ENCODE measurements at regions of chr1 and their contacts with region 1.

Region 1: DNA sequence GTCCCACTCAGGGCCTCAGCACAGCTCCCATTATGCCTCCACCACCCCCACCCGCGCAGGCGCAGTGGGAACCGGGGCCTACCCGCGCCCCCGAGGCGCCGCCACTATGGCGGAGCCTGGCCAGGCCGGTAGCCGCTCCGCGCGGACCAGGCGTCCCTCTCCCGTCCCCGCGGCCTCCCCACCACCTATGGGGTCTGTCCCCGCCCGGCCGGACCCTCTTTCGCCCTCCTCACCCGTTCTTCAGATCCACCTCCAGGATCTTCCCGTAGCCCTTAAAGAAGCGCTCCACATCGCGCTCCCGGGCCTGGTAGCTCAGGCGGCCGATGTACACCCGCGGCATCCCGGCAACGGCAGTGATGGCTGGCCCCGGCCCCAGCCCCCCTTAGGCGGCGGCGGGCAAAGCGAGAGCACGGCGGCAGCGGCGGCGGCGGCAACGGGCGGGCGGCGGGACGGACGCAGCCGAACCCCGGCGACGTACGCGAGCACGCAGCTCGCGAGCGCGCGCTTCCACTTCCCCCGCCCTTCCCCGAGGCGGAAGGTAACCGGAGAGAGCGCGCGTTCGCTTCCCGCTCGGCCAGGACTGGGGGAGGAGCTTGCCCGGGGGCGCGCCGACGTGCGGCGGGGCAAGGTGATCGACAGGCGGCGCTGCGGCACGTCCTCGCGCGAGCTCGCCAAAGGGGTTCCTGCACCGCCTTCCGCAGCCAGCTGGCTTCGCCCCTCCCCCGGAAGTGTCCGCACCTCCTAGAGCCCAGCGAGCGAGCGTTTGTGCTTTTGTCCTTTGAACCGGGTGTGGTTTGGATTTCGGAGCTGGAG is at the start of gene SRSF4:
- DNase-seq: peak; percentile 100
- H3K4me3 Mint-ChIP-seq: peak within 1 kb of the TSS; percentile 96
- H3K27ac Mint-ChIP-seq: peak within 1 kb of the TSS; percentile 97
- H3K4me1 Mint-ChIP-seq: peaks cover 44% of the 10 kb centered on the region
- H3K27me3 Mint-ChIP-seq: no peaks in the 10 kb centered on the region
- total RNA-seq, gene SRSF4: 138 and 141 TPM in 2 replicates

Region 2: GRCh38 chr1:28642847-28643635 is 538.6 kb before region 1 on chr1 and contains the start of gene TAF12:
- intact Hi-C with region 1: loop called (anchors 5 kb)
- DNase-seq: peak; percentile 96
- H3K4me3 Mint-ChIP-seq: peak within 1 kb of the TSS; percentile 98
- H3K27ac Mint-ChIP-seq: peak within 1 kb of the TSS; percentile 99
- H3K4me1 Mint-ChIP-seq: peaks cover 39% of the 10 kb centered on the region
- H3K27me3 Mint-ChIP-seq: no peaks in the 10 kb centered on the region
- total RNA-seq, gene TAF12: 31.7 and 33.8 TPM in 2 replicates

Region 3: DNA sequence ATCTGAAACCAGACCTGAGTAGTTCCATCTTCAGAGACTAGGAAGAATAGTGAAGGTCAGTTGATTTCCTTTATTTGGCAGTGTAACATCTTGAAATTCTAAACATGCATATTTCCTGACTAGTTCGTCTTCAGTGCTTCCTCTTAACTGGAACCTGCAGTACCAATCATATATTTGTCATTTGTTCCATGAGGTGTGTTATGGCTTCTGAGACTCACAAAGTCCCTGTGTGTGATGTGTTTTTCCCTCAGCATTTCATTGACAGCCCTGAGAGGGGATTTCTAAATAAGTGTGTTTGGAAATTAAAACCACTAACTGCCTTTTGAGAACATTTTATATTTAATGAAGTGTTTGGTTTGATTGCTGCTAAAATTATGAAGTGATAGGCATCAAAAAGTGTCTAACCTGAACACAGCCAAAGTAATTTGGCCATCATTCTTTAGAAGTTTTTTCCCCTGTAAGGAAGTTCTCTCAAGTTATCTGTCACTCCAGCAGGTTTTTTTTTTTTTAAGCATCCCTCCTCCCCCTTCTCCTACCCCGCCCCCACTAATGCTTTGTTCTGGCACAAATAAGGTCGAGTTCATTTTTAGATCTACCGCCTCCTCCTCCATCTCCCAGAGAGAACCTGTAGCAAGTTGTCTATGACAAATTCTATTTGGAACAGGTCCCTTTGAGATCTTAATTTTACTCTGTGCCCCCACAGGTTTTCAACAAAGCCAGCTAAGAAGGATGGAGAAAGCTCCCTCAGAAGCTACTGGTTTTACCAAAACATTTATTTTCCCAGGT is 119.3 kb before region 1 on chr1:
- intact Hi-C with region 1: loop called (anchors 5 kb)
- DNase-seq: no peak
- H3K4me3 Mint-ChIP-seq: peak overlapping the region; percentile 74
- H3K27ac Mint-ChIP-seq: peak overlapping the region; percentile 91
- H3K4me1 Mint-ChIP-seq: peaks cover 25% of the 10 kb centered on the region
- H3K27me3 Mint-ChIP-seq: no peaks in the 10 kb centered on the region

Region 4: DNA sequence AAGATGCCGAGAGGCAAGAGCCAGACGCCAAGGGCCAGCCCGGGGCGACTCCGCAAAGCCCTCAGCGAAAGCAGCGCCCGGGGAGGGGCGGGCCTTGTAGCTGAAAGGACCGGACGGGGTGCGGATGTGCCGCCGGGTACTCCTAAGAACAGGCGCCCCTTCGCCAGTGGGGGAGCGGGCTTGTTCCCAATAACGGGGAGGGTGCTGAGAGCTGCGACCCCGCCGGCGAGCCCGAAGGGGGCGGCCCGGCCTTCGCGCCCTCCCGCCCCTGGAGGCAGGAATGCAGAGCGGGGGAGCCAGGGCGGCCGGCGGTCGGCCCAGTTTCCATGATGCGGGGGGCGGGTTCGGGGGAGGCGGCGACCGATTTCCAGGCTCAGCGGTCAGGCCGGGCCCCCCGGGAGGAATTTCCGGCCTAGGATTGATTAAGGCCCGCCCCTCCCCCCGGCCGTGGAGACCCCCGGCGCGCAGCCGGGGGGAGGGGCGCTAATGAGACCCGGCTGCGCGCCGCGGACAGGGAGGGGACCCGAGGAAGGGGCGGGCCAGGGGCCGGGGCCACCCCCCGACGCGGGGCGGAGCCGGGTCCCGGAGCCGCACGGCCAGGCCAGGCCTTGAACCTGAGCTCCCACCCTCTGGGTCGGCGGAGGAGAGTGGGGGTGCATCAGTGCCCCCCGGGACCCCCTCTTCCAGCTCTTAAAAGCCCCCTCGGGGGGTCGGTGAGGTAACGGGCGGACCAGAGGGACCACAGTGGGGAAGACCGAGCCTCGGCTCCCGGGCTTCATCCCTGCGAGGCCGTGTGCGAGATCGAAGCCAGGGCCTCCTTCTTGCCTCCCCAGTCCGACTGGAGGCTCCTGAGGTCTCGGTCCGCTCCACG is 57.0 kb before region 1 on chr1:
- intact Hi-C with region 1: loop called (anchors 1 kb)
- DNase-seq: peak; percentile 88
- H3K4me3 Mint-ChIP-seq: peak overlapping the region; percentile 82
- H3K27ac Mint-ChIP-seq: peak overlapping the region; percentile 29
- H3K4me1 Mint-ChIP-seq: peaks cover 6% of the 10 kb centered on the region
- H3K27me3 Mint-ChIP-seq: peaks cover 17% of the 10 kb centered on the region

Region 5: DNA sequence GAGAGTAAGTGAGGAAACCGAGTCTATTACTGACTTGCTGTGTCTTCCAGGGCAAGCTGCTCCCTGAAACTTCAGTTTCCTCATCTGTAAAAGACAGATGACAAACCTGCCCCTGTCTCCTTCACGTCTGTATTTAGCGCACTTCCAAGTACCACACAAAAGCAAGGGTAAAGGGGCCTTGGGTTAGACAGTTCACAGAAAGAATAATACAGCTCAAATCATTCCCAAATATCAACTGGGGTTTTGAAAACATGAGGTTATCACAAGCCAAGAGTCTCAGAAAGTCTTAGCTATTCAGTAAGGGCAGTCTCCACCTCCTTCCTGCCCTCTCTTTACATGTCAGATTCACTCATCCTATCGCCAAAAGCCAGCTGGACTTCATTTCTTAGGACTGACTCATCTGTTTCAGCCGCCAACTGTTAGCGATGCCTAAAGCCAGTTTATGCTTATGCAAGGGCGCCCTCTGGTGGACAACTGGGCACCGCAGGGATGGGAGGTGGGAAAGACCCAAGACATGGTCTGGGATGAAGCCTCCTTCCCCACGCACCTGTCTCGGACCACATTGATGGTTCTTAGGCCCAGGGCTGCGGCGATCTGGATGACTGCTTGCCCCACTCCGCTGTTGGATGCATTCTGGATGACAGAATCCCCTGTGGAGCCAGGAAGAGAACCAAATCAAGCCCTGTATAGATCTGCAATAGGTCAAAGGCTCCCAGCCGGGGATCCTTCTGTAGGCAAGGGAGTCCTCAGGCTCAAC is 21.1 kb after region 1 on chr1:
- intact Hi-C with region 1: loop called (anchors 1 kb)
- DNase-seq: peak; percentile 97
- H3K4me3 Mint-ChIP-seq: no peak overlapping the region
- H3K27ac Mint-ChIP-seq: peak overlapping the region; percentile 34
- H3K4me1 Mint-ChIP-seq: peaks cover 15% of the 10 kb centered on the region
- H3K27me3 Mint-ChIP-seq: no peaks in the 10 kb centered on the region

Region 6: GRCh38 chr1:29230553-29231378 is 49.1 kb after region 1 on chr1 and contains the start of gene MECR:
- intact Hi-C with region 1: loop called (anchors 2 kb)
- DNase-seq: peak; percentile 99
- H3K4me3 Mint-ChIP-seq: peak within 1 kb of the TSS; percentile 95
- H3K27ac Mint-ChIP-seq: peak within 1 kb of the TSS; percentile 91
- H3K4me1 Mint-ChIP-seq: peaks cover 13% of the 10 kb centered on the region
- H3K27me3 Mint-ChIP-seq: peaks cover 19% of the 10 kb centered on the region
- total RNA-seq, gene MECR: 36.4 and 41.3 TPM in 2 replicates

Measured in activated CD4-positive, alpha-beta T cell treated with anti-CD3 and anti-CD28 coated beads, Interleukin-2, amount 10 ng/mL, durations not matched to agents 24 days and 14 days (primary cell).